ENCODE measurements at regions of chr4 and their contacts with region 1.

Region 1: DNA sequence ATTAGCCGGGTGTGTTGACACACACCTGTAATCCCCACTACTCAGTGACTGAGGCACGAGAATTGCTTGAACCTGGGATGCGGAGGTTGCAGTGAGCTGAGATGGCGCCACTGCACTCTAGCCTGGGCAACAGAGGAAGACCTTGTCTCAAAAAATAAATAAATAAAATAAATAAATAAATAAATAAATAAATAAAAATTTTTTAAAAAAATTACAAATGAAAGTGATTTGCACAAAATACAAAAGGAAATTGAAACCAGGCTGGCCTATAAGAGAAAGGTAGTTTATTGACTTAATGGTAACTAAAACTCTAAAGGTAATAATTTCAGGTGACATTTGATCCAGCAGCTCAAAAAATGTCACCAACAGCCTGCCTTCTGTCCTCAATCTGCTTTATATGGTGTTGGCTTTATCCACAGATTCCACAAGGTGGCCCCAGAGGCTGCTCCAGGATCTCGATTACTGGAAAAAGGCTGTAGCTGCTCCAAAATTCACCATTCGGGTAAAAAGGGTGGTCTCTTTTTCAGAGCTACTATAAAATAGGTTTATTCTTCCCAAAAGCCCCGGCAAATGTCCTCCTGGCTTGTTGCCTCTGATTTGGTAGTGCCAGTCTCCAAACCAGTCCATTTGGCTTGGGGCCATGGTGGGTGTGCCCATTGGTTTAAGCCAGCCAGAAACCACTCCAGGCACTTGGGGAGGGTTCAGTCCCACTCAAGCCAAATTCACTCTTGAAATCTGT is 61.4 kb upstream of the TRIM2 start:
- DNase-seq: peak; percentile 52 to 62
- H3K4me3 ChIP-seq: peak overlapping the region; percentile 29; the same call in 1 of the 2 replicates
- H3K27ac ChIP-seq: peak overlapping the region; percentile 82
- H3K4me1 ChIP-seq: peaks cover 31% of the 10 kb centered on the region
- H3K27me3 ChIP-seq: no peaks in the 10 kb centered on the region
- CTCF ChIP-seq: peak; percentile 82

Region 2: GRCh38 chr4:153023681-153024394 is 119.0 kb before region 1 on chr4:
- CTCF ChIA-PET with region 1: no interaction called
- POLR2A ChIA-PET with region 1: no interaction called
- intact Hi-C with region 1: no loop called
- DNase-seq: no peak
- H3K4me3 ChIP-seq: no peak overlapping the region
- H3K27ac ChIP-seq: no peak overlapping the region
- H3K4me1 ChIP-seq: no peaks in the 10 kb centered on the region
- H3K27me3 ChIP-seq: no peaks in the 10 kb centered on the region
- CTCF ChIP-seq: no peak

Region 3: GRCh38 chr4:153221783-153222706 is 79.2 kb after region 1 on chr4:
- CTCF ChIA-PET with region 1: no interaction called
- POLR2A ChIA-PET with region 1: no interaction called
- intact Hi-C with region 1: loop called (anchors 1 kb)
- DNase-seq: no peak
- H3K4me3 ChIP-seq: no peak overlapping the region
- H3K27ac ChIP-seq: no peak overlapping the region
- H3K4me1 ChIP-seq: peaks cover 43% of the 10 kb centered on the region
- H3K27me3 ChIP-seq: no peaks in the 10 kb centered on the region
- CTCF ChIP-seq: no peak

Region 4: DNA sequence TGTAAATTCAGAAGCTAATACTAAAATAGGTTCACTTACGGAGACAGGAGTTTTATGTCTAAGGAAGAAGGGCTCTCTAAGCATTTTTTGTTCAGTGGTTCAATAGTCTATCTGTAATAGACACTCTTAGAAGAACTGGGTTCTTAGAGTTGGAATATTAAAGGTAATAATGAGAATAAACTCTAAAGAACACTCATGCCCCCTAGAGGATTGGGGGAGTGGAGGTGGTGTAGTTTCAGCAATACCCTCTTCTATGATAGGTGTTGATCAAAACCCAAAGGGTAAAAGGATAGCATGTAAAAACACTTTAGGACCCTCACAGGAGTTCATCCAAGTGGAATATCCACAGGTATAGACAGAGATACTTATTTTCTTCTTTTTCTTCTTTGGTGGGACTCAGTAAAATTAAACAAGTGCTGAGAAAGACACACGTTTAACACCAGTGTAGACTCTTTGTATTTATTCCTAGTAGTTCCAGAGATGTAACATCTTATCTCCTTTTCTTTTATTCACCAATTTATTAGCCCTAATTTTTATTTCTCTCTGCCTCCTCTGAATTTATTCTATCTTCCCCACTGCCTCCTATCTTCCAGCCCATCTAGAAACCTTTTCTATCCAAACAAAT is 175.9 kb after region 1 on chr4:
- CTCF ChIA-PET with region 1: interaction called, 6 read pairs
- POLR2A ChIA-PET with region 1: no interaction called
- intact Hi-C with region 1: loop called (anchors 1 kb)
- DNase-seq: peak in 1 of 2 experiments; percentile 8
- H3K4me3 ChIP-seq: no peak overlapping the region
- H3K27ac ChIP-seq: no peak overlapping the region
- H3K4me1 ChIP-seq: no peaks in the 10 kb centered on the region
- H3K27me3 ChIP-seq: no peaks in the 10 kb centered on the region
- CTCF ChIP-seq: peak; percentile 69

Region 5: DNA sequence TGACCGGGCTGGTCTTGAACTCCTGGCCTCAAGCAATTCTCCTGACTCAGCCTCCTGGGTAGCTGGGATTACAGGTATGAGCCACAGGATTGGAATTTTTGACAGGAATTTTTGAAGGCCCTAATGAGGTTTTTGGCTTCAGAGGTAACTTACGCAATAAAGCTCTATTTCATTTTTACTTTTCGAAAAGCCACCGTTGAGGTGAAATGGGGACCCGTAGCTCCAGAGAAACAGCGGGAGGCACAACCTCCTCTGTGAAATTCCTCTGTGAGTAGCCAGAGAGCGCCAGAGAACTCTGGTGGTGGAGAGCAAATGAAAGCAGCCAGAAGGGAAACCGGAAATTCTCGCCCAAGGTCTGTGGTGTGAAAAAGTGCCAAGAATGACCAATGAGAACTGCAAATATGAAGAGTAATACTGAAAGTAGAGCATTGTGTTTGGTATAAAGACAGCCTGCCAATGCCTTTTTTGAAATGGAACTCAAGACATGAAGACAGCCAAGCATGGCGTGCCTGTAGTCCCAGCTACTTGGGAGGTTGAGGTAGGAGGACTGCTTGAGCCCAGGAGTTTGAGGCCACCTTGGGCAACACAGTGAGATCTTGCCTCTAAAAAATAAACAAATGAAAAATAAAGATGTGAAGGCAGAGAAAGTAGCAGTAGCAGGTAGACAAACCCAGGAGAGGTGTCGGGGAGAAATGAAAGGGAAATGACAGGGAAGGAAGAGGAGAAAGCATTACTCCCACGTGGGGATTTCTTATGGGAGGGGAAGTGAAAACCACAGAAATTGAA is 290.3 kb after region 1 on chr4:
- CTCF ChIA-PET with region 1: no interaction called
- POLR2A ChIA-PET with region 1: no interaction called
- intact Hi-C with region 1: loop called (anchors 1 kb)
- DNase-seq: peak; percentile 72 to 87
- H3K4me3 ChIP-seq: no peak overlapping the region
- H3K27ac ChIP-seq: peak overlapping the region; percentile 61; the same call in 1 of the 2 replicates
- H3K4me1 ChIP-seq: 0 out of 2 replicates have a peak, but pooled peaks cover 8% of the 10 kb centered on the region
- H3K27me3 ChIP-seq: no peaks in the 10 kb centered on the region
- CTCF ChIP-seq: peak; percentile 70

Measured in PC-9 (cell line).